Activated CD4-positive, alpha-beta T cell treated with anti-CD3 and anti-CD28 coated beads, Interleukin-2, amount 10 ng/mL, durations not matched to agents 24 days and 14 days (primary cell): ENCODE measurements at regions of chr11 and their contacts with region 1.

Region 1: GRCh38 chr11:7986768-7987559 is at the start of gene EIF3F:
- DNase-seq: peak; percentile 97
- H3K4me3 Mint-ChIP-seq: peak within 1 kb of the TSS; percentile 95
- H3K27ac Mint-ChIP-seq: peak within 1 kb of the TSS; percentile 95
- H3K4me1 Mint-ChIP-seq: peaks cover 23% of the 10 kb centered on the region
- H3K27me3 Mint-ChIP-seq: no peaks in the 10 kb centered on the region
- total RNA-seq, gene EIF3F: 224 and 226 TPM in 2 replicates

Region 2: GRCh38 chr11:7892840-7893254 is 94.1 kb before region 1 on chr11:
- intact Hi-C with region 1: loop called (anchors 1 kb)
- DNase-seq: peak; percentile 67
- H3K4me3 Mint-ChIP-seq: no peak overlapping the region
- H3K27ac Mint-ChIP-seq: no peak overlapping the region
- H3K4me1 Mint-ChIP-seq: peaks cover 5% of the 10 kb centered on the region
- H3K27me3 Mint-ChIP-seq: peaks cover 15% of the 10 kb centered on the region

Region 3: DNA sequence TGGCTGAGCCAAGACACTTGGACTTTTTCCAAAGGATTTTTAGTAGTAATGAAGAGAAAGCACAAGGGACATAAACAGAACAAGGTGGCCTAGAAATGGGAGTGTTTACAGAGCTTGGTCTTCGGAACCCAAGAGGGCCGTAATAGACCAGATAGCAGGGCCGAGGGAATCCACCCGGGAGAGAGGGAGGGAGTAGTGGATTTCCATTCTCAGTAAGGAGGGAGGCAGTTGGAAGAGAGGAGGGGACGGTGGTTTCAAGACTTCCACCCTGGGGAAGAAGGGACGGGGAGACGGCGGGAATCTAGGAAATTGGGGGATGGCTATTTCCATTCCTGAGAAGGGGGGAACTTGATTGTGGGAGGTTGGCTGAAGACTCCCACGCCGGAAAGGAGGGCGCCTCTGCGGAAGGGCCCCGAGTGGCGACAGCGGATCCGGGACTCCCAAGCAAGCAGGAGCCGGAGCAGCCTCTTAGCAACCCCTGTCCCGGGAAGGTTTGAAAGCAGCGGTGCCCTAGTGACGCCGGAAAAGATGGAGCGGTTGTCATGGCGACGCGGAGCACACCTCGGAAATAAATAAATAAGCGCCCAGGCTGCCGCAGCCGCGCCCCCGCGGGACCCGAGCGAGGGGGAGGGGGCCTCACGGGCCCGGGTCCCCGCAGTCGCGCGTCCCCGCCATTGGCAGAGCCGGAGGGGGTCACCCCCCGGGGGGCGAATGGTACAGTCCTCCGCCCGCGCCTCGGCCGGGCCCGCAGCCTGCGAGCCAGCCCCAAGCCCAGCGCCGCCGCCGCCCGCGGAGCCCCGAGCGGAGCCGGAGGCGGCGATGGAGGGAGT is 31.7 kb after region 1 on chr11:
- intact Hi-C with region 1: loop called (anchors 2 kb)
- DNase-seq: peak; percentile 90
- H3K4me3 Mint-ChIP-seq: peak overlapping the region; percentile 75
- H3K27ac Mint-ChIP-seq: peak overlapping the region; percentile 51
- H3K4me1 Mint-ChIP-seq: peaks cover 11% of the 10 kb centered on the region
- H3K27me3 Mint-ChIP-seq: peaks cover 55% of the 10 kb centered on the region

Region 4: DNA sequence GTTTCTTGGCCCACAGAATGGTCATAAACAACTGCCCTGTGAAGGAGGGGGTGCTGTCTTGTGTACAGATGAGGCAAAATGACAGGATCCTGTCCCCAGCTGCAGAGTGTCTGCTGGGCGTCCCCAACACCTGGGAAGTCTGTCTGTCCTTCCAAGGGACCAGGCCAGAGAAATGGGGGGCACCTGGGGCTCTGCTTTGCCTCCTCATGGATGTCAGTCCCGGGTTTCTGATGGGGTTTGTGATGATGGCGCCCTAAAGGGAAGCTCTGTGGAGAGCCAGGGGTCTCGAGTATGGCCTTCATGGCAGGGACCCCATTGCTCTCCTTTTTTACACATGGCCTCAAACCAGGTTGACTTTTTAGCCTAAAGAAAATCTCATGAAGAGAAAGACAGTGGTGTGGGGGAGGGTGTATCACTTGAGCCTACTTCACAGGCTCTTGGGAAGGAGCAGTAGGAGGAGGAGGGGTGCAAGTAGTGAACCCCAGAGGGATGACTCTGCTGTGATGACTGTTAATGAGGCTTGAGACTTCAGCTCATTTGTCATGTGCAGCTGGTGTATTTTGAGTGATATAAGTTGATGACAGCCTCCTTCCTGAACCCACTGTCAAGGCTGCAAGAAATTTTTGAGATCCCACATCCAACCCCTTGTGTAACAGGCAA is 53.4 kb after region 1 on chr11:
- intact Hi-C with region 1: no loop called
- DNase-seq: no peak
- H3K4me3 Mint-ChIP-seq: no peak overlapping the region
- H3K27ac Mint-ChIP-seq: no peak overlapping the region
- H3K4me1 Mint-ChIP-seq: no peaks in the 10 kb centered on the region
- H3K27me3 Mint-ChIP-seq: peaks cover 15% of the 10 kb centered on the region

Region 5: DNA sequence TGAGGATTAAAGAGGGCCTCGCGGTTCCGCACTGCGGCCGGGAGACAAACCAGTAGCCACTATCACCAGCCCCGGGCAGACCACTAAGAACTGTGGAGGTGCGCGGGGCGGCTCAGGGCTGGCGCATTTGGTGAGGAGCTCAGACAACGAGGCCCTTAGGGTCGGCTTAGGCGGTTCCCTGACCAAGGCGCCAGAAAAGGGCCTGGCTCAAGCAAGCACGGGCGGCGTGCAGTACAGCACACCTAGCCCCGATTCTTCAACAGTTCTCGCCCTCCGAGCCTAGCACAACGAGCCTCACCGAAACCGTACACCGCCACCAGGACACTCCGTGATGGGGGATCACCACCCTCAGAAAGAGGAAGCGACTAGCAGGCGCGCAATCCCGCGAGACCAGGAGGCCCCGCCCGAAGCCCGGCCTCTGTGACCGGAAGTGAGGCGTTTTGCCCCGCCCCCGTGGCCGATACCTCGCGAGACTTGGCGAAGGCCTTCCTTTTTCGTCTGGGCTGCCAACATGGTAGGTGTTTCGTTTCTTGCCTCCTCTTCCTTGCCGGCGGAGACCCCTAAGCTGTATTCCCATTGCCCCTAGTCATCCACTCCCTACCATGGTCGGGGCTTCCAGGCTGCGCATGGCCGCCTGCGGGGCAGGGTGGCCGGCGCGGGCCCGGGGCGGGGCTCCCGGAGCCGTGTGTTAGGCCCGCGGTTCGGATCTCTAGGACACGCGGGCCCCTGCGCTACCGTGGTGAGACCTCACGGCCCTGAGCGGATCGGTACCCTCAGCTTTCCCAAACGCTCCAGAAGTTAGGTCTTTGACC is 695.5 kb after region 1 on chr11 and contains the starts of genes RPL27A and TRIM66:
- intact Hi-C with region 1: loop called (anchors 5 kb)
- DNase-seq: peak; percentile 100
- H3K4me3 Mint-ChIP-seq: peak within 1 kb of the TSS; percentile 97
- H3K27ac Mint-ChIP-seq: peak within 1 kb of the TSS; percentile 95
- H3K4me1 Mint-ChIP-seq: peaks cover 30% of the 10 kb centered on the region
- H3K27me3 Mint-ChIP-seq: no peaks in the 10 kb centered on the region
- total RNA-seq, gene RPL27A: 738 and 745 TPM in 2 replicates
- total RNA-seq, gene TRIM66: 11.9 and 13.4 TPM in 2 replicates